ENCODE measurements at regions of chr4 and their contacts with region 1.

Region 1: DNA sequence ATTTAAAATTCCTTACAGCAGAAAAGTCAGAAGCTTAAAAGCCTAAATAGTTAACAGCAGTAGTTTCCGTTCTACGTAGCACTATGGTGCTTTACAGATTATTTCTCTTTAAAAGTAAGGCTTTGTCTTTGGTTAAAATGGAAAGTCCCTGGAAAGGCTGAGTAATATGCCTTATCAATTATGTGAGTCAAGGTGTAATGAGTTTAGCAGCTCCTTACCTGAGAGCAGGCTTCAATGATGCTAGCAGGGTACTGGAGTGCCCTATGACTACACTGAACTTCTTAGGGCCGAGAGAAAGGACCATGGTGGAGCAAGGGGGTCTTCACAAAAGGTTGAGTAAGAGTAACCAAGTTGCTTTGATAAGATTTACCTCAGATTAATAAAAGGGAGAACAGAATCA is 12.6 kb upstream of the NKX6-1 start:
- DNase-seq: no peak
- H3K4me3 ChIP-seq: no peak overlapping the region
- H3K4me3 Mint-ChIP-seq: no peak overlapping the region
- H3K27ac ChIP-seq: no peak overlapping the region
- H3K27ac Mint-ChIP-seq: no peak overlapping the region
- H3K4me1 ChIP-seq: no peaks in the 10 kb centered on the region
- H3K4me1 Mint-ChIP-seq: no peaks in the 10 kb centered on the region
- H3K27me3 ChIP-seq: peaks cover 11% of the 10 kb centered on the region
- H3K27me3 Mint-ChIP-seq: peaks cover 23 to 30% of the 10 kb centered on the region in 2 donors

Region 2: GRCh38 chr4:84529169-84529751 is 17.6 kb after region 1 on chr4:
- CTCF ChIA-PET with region 1: interaction called, 17 read pairs
- POLR2A ChIA-PET with region 1: no interaction called
- intact Hi-C with region 1: no loop called
- DNase-seq: peak in 4 of 5 donors; percentile 12 to 27 (median 22)
- H3K4me3 ChIP-seq: no peak overlapping the region
- H3K4me3 Mint-ChIP-seq: no peak overlapping the region
- H3K27ac ChIP-seq: no peak overlapping the region
- H3K27ac Mint-ChIP-seq: no peak overlapping the region
- H3K4me1 ChIP-seq: no peaks in the 10 kb centered on the region
- H3K4me1 Mint-ChIP-seq: no peaks in the 10 kb centered on the region
- H3K27me3 ChIP-seq: no peaks in the 10 kb centered on the region
- H3K27me3 Mint-ChIP-seq: peaks cover 9 to 18% of the 10 kb centered on the region in 2 donors

Region 3: DNA sequence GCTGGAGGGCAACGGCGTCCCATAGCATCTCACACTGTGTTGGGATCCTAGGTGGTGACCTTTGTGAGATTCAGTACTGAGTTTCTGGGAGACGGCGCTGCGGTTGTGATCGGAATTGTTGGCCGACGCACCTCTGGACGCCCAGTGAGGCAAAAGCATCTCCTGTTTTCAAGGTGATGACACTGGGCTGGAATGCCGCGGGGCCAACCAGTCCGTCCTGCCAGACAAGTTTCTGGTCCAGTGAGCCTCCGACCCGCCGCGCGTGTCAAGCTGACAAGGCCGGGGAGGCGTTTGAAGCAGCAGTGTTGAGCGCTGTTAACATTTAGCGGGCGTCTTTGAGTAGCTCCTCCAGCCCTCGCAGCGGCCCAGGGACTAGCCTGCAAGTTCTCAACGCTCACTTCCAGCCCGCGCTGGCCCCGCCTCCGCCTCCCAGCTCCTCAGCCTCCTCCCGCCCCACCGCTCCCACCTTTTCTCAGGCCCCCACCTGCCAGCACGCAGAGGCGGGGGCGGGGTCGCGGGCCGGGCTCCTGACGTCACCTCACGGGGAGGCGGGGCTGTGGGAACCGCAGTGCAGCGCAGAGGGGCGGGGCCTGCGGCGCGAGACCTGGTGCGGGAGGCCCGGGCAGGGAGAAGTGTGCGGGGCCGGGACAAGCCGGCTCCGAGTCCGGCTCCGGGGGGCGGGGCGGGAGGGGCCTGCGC is 70.7 kb after region 1 on chr4:
- CTCF ChIA-PET with region 1: no interaction called
- POLR2A ChIA-PET with region 1: no interaction called
- intact Hi-C with region 1: no loop called
- DNase-seq: peak; percentile 88 to 92 (median 90)
- H3K4me3 ChIP-seq: peak overlapping the region in 1 of 2 donors; percentile 51
- H3K4me3 Mint-ChIP-seq: peak overlapping the region; percentile 66 to 87 (median 82)
- H3K27ac ChIP-seq: peak overlapping the region; percentile 31
- H3K27ac Mint-ChIP-seq: peak overlapping the region; percentile 62 to 86 (median 74)
- H3K4me1 ChIP-seq: peaks cover 19% of the 10 kb centered on the region
- H3K4me1 Mint-ChIP-seq: peaks cover 9 to 18% (median 15%) of the 10 kb centered on the region in 4 donors
- H3K27me3 ChIP-seq: peaks cover 8% of the 10 kb centered on the region
- H3K27me3 Mint-ChIP-seq: peaks cover 16 to 32% of the 10 kb centered on the region in 2 donors

Region 4: DNA sequence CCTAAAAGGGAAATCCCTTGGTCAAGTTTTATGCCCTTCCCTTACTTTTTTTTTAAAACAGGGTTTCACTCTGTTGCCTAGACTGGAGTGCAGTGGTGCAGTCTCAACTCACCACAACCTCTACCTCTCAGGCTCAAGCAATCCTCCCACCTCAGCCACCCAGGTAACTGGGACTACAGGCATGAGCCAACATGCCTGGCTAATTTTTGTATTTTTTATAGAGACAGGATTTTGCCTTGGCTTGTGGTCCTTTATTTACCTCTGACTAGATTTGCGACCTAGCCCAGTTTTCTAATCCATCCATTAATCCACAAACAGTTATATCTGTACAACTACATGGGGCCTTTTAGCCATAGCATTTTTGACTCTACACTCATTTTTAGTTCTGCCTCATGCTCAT is 94.9 kb after region 1 on chr4:
- CTCF ChIA-PET with region 1: no interaction called
- POLR2A ChIA-PET with region 1: no interaction called
- intact Hi-C with region 1: no loop called
- DNase-seq: no peak
- H3K4me3 ChIP-seq: no peak overlapping the region
- H3K4me3 Mint-ChIP-seq: no peak overlapping the region
- H3K27ac ChIP-seq: no peak overlapping the region
- H3K27ac Mint-ChIP-seq: no peak overlapping the region
- H3K4me1 ChIP-seq: no peaks in the 10 kb centered on the region
- H3K4me1 Mint-ChIP-seq: no peaks in the 10 kb centered on the region
- H3K27me3 ChIP-seq: no peaks in the 10 kb centered on the region
- H3K27me3 Mint-ChIP-seq: peaks cover 0 to 1% of the 10 kb centered on the region in 2 donors

Measured in CD4-positive, alpha-beta memory T cell (primary cell).